ENCODE measurements at regions of chr14 and their contacts with region 1.

Region 1: GRCh38 chr14:96055065-96055752 is 16.0 kb downstream of the C14orf132 start:
- DNase-seq: no peak
- H3K4me3 ChIP-seq: no peak overlapping the region
- H3K27me3 ChIP-seq: no peaks in the 10 kb centered on the region
- CTCF ChIP-seq: no peak

Region 2: GRCh38 chr14:95979339-95980042 is 75.7 kb before region 1 on chr14:
- CTCF ChIA-PET with region 1: no interaction called
- POLR2A ChIA-PET with region 1: no interaction called
- DNase-seq: no peak
- H3K4me3 ChIP-seq: no peak overlapping the region
- H3K27me3 ChIP-seq: no peaks in the 10 kb centered on the region
- CTCF ChIP-seq: no peak

Region 3: DNA sequence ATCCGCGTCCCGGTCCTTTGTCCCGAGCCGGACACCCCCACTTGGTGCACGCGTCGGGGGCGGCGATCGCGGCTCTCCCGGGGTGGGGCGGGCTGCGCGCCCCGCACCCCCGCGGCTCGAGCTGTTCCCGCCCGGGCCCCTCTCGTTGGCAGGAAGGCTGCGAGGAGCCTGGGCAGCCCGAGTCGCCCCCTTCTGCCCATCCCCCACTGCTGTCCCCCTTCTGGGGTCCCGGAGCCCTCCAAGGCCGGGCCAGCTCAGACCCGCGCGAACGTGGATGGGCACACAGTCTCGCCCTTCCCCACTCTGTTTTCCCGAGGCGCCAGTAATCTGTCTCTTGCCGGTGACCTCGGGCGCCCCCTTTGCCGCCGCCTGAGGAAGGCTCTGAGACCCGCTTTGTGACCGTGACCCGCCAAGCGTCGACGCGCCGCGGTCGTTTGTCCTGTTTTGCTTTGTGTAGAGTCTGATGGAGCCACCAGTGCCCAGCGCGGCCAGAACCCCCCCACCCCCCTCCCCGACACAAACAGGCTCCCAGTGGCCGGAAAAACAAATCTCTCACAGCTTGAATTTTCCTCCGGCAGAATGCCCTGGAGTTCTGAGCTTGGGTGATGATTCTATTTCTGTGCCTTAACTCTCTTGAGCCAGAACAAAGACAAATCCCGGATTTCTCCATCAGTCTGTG is 15.4 kb before region 1 on chr14:
- CTCF ChIA-PET with region 1: interaction called, 11 read pairs
- POLR2A ChIA-PET with region 1: no interaction called
- DNase-seq: no peak
- H3K4me3 ChIP-seq: peak overlapping the region; percentile 96
- H3K27me3 ChIP-seq: peaks cover 7% of the 10 kb centered on the region
- CTCF ChIP-seq: peak; percentile 42